ENCODE measurements at regions of chr2 and their contacts with region 1.

Region 1: GRCh38 chr2:100818606-100819369 is 1.2 kb upstream of the NPAS2 start:
- DNase-seq: peak; percentile 84

Region 2: DNA sequence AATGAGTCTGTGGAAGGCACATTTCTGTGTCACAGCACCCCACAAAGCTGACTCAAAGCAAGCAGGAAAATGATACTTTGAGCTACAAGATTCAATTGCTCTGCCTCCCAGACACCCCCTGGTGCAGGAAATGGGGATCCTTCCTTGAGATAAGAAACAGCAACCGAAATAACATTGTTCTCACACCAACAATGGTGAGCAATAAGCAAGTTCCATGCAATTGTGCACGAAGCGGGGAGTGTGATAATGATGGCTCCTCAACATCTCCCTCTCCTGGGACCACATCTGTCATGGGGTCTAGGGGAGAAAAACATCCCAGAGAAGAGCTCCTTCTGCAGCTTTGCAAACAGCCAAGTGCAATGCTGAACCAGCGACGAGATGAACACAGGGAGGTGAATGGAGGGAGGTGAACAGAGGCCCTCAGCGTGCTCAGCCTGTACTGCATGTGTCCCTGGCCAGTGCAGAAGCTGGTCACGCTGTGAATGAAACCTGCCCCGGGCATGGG is 188.3 kb before region 1 on chr2:
- intact Hi-C with region 1: no loop called
- DNase-seq: no peak

Region 3: DNA sequence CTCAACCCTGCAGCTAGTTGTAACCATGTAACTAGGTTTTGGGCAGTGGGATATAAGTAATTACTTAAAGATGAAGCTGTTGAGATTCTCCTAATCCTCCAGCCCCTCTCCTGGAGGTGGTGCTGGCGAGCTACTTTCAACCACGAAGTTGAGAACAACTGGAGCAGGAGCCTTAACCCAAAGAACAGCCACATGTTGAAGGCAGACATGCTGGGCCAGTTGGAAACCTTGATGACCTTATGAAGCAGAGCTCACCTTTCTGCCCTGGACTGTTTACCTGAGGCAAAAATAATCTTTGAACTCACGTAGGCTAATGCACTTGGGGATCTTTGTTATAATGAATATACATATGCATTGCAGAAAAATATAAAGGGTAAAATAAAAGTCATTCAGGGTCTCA is 88.4 kb before region 1 on chr2:
- intact Hi-C with region 1: loop called (anchors 2 kb)
- DNase-seq: no peak

Region 4: DNA sequence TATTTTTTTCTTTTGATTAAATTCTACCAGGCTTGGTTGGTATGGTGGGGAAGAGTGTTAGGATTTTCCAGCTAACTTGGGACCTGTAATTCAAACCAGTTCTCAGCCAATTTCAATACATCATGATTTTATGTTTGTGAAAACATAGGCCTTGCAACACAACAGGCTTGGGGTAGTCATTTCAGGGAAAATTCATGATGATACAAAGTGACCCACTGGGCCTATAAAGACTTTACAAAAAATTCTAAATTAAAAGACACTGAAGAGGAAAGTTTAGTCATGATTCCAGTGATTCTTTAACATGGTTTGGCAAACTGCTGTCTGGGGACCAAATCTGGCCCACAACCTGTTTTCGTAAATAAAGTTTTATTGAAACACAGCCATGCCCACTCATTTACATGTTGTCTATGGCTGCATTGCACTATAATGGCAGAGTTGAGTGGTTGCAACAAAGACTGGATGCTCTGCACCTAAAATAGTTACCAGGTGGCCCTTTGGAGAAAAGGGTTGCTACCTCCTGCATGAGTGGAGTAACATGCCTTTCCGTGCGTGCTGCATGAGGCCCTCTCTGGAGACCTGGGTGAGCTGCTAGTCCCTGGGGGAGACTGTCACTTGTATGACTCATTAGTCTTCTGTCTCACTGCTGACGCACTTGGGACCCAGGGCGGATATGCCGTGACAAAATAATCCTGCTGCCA is 74.8 kb after region 1 on chr2:
- intact Hi-C with region 1: loop called (anchors 2 kb)
- DNase-seq: no peak

Region 5: GRCh38 chr2:100984892-100985379 is 166.1 kb after region 1 on chr2:
- intact Hi-C with region 1: loop called (anchors 10 kb)
- DNase-seq: peak; percentile 86

Region 6: DNA sequence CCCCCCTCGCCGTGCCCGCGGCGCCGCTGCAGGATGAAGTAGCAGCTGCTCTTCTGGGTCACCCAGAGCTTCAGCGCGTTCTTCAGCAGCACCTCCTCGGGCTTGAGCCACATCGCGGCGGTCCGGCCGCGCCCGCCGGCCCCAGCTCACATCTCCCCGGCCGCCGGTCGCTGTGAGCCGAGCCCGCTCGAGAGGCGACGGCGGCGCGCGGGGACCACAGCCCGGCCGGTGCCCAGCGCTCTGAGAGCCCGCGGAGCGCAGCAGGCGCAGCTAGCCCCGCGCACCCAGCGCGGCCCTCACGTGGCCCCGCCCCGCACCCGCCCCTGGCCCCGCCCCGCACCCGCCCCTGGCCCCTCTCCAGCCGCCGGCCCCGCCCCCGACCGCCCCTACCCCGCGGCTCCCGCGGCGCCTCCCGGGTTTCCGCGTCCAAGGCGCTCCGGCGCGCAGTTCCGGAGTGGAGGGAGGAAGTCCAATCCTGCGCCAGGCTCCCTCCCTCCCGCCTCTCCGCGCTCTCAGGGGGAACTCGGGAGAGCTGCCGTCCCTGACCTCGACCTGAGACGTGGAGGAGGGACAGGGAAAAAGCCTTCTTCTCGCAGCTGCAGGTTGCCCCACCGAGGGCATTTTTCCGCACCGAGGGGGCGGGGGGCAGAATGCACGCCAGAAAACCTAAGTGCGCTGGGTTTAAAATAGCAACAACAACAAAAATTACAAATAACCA is 332.5 kb after region 1 on chr2 and contains the start of gene TBC1D8:
- intact Hi-C with region 1: loop called (anchors 10 kb)
- DNase-seq: peak; percentile 97
- total RNA-seq, gene TBC1D8: 52.3 TPM